Activated CD4-positive, alpha-beta memory T cell treated with anti-CD3 and anti-CD28 coated beads, Interleukin-2, amount 10 ng/mL, durations not matched to agents 7 days and 5 days (primary cell): ENCODE measurements at regions of chr2 and their contacts with region 1.

Region 1: GRCh38 chr2:11738589-11739436 is 7.6 kb upstream of the LPIN1 start:
- DNase-seq: peak; percentile 47
- H3K4me3 Mint-ChIP-seq: no peak overlapping the region
- H3K27ac Mint-ChIP-seq: no peak overlapping the region
- H3K4me1 Mint-ChIP-seq: peaks cover 17% of the 10 kb centered on the region
- H3K27me3 Mint-ChIP-seq: peaks cover 13% of the 10 kb centered on the region

Region 2: GRCh38 chr2:11716689-11717321 is 22.0 kb before region 1 on chr2:
- CTCF ChIA-PET with region 1: no interaction called
- POLR2A ChIA-PET with region 1: no interaction called
- DNase-seq: no peak
- H3K4me3 Mint-ChIP-seq: no peak overlapping the region
- H3K27ac Mint-ChIP-seq: no peak overlapping the region
- H3K4me1 Mint-ChIP-seq: peaks cover 3% of the 10 kb centered on the region
- H3K27me3 Mint-ChIP-seq: peaks cover 37% of the 10 kb centered on the region

Region 3: DNA sequence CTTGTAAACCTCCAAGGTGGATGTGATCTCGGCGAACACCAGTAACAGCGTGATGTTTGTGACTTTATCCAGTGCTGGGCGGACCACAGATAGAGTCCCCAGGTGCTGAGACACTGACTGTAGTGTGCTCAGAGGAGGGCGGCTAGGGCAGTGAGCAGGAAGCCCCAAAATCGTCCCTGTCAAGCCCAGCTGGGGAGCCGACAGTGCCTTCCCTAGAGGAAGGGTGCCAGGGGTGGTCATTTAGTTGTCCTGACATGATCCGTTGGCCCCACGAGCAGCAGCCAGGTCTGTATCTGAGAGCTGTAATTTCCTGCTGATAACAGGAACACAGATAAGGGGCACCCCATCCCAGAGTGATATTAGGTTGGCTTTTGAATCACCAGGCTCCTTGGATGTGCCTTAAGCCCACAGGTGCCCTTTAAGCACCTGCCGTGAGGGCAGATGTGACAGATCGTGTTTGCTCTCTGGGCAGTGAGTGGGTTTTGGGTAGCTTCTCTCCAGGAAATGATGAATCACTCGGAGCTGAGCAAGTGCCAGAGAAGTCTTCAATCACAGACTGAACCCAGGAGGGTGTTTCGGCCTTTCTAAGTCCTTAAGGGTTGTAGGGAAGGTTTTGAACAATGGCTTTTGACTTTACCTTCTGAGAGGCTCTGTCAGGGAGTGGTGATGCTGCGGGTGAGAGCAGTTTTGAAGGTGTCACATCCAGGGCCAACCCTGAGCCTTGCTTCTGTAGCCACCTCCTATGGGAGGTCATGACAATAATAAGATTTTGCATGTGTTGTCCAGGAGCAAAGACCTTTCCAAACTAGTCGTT is 15.3 kb after region 1 on chr2:
- CTCF ChIA-PET with region 1: interaction called, 13 read pairs
- POLR2A ChIA-PET with region 1: interaction called, 32 read pairs
- DNase-seq: peak; percentile 72
- H3K4me3 Mint-ChIP-seq: peak overlapping the region; percentile 63
- H3K27ac Mint-ChIP-seq: peak overlapping the region; percentile 94
- H3K4me1 Mint-ChIP-seq: peaks cover 92% of the 10 kb centered on the region
- H3K27me3 Mint-ChIP-seq: no peaks in the 10 kb centered on the region

Region 4: GRCh38 chr2:11778923-11779757 is 40.3 kb after region 1 on chr2:
- CTCF ChIA-PET with region 1: interaction called, 75 read pairs
- POLR2A ChIA-PET with region 1: interaction called, 39 read pairs
- DNase-seq: peak; percentile 85
- H3K4me3 Mint-ChIP-seq: peak overlapping the region; percentile 34
- H3K27ac Mint-ChIP-seq: peak overlapping the region; percentile 67
- H3K4me1 Mint-ChIP-seq: peaks cover 44% of the 10 kb centered on the region
- H3K27me3 Mint-ChIP-seq: no peaks in the 10 kb centered on the region

Region 5: DNA sequence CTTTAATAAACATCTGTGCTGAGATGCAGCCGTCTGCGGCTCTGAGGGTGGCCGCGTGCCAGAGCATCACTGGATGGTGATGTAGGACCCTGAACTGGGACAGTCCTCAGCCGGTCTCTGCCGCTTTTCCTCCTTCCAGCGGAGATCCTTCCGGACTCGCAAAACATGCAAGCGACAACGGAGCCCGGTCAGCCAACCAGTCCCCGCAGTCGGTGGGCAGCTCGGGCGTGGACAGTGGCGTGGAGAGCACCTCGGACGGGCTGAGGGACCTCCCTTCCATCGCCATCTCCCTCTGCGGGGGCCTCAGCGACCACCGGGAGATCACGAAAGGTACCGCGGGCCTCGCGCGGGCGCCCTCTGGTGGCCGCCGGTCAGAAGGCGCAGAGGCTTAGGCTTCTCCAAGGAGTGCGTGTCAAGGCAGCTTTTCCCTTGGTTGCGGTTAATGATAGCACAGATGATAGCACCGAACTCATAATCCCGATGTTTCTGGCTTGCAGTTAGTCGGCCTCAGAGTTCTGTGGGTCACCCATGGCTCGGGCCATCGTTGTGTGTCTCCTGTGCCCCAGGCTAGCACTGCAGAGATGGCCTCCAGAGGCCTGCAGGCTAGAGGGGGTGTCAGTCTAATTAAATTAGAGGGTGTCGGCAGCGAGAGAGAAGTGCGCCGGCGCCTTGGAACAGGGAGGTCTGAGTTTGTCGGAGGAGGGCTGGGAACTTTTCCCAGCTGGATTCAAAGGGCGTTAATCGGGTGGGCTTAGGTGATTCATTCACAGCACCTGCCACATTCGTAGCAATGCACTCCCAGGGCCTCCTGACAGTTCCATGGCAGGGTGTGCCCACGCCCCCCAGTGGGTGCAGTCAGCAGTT is 46.2 kb after region 1 on chr2:
- CTCF ChIA-PET with region 1: interaction called, 75 read pairs
- POLR2A ChIA-PET with region 1: interaction called, 17 read pairs
- DNase-seq: peak; percentile 42
- H3K4me3 Mint-ChIP-seq: no peak overlapping the region
- H3K27ac Mint-ChIP-seq: no peak overlapping the region
- H3K4me1 Mint-ChIP-seq: peaks cover 6% of the 10 kb centered on the region
- H3K27me3 Mint-ChIP-seq: no peaks in the 10 kb centered on the region